Activated CD4-positive, alpha-beta T cell treated with anti-CD3 and anti-CD28 coated beads for 36 hours (primary cell): ENCODE measurements at regions of chr1 and their contacts with region 1.

Region 1: GRCh38 chr1:196660852-196661251 is 9.0 kb downstream of the CFH start:
- DNase-seq: peak; percentile 10
- ATAC-seq: peak; percentile 36
- H3K4me3 Mint-ChIP-seq: no peak overlapping the region
- H3K27ac Mint-ChIP-seq: no peak overlapping the region
- H3K4me1 Mint-ChIP-seq: peaks cover 3% of the 10 kb centered on the region
- H3K27me3 Mint-ChIP-seq: no peaks in the 10 kb centered on the region

Region 2: DNA sequence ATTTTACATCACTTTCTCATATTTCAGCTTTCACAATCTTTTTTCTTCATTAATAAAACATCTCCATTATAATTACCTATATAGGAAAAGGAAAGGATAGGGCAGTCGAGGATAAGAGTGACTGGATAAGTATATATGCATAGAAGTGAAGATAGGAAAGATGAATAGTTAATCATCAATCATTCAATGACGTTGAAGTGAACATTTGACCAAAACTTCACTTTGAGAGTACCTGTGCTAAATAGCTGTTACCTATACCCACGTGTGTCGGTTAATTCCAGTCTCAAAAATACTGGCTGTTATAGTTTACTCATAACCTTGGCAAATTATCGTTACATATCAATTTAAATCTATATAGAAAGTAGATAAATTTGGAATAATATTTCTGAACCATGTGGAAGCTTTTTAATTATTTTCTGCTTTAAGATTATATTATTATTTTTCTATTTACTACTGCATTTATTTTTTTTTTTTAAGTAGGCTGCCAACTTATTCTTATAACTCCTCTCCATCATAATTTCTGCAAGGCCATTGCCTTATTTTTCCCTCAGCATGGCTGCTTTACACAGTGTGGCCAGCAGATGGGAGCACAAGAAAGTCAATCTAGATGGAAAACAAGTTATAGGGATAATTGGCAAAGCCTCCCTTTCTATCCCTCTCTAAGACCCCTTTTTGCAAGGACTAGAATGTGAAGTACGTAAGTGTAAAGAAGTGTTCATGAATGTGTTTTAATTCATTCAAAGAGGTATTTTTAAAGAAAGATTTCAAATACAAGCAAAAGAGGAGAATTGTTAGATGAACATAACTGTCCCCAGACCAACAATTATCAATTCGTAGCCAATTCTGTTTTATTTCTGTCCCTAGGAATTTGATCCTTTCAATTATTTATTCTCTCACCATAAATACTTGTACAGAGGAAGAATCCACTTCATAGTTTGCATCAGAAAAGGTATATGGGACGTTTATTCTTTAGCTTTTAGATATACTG is 343.0 kb before region 1 on chr1:
- CTCF ChIA-PET with region 1: no interaction called
- POLR2A ChIA-PET with region 1: no interaction called
- intact Hi-C with region 1: loop called in 1 of 2 experiments (anchors 5 kb)
- DNase-seq: peak; percentile 6
- ATAC-seq: no peak
- H3K4me3 Mint-ChIP-seq: no peak overlapping the region
- H3K27ac Mint-ChIP-seq: no peak overlapping the region
- H3K4me1 Mint-ChIP-seq: no peaks in the 10 kb centered on the region
- H3K27me3 Mint-ChIP-seq: peaks cover 1% of the 10 kb centered on the region

Region 3: GRCh38 chr1:196355206-196355786 is 305.6 kb before region 1 on chr1:
- CTCF ChIA-PET with region 1: no interaction called
- POLR2A ChIA-PET with region 1: no interaction called
- intact Hi-C with region 1: loop called in 1 of 2 experiments (anchors 5 kb)
- DNase-seq: no peak
- ATAC-seq: no peak
- H3K4me3 Mint-ChIP-seq: no peak overlapping the region
- H3K27ac Mint-ChIP-seq: no peak overlapping the region
- H3K4me1 Mint-ChIP-seq: no peaks in the 10 kb centered on the region
- H3K27me3 Mint-ChIP-seq: no peaks in the 10 kb centered on the region